CD4-positive, alpha-beta T cell (primary cell): ENCODE measurements at regions of chr3 and their contacts with region 1.

Region 1: GRCh38 chr3:178930116-178930515 is 141.5 kb downstream of the ZMAT3 start:
- DNase-seq: no peak
- ATAC-seq: no peak
- H3K4me3 ChIP-seq: no peak overlapping the region
- H3K4me3 Mint-ChIP-seq: no peak overlapping the region
- H3K27ac ChIP-seq: no peak overlapping the region
- H3K27ac Mint-ChIP-seq: no peak overlapping the region
- H3K4me1 ChIP-seq: no peaks in the 10 kb centered on the region
- H3K4me1 Mint-ChIP-seq: no peaks in the 10 kb centered on the region
- H3K27me3 ChIP-seq: no peaks in the 10 kb centered on the region
- H3K27me3 Mint-ChIP-seq: no peaks in the 10 kb centered on the region
- CTCF ChIP-seq: no peak

Region 2: DNA sequence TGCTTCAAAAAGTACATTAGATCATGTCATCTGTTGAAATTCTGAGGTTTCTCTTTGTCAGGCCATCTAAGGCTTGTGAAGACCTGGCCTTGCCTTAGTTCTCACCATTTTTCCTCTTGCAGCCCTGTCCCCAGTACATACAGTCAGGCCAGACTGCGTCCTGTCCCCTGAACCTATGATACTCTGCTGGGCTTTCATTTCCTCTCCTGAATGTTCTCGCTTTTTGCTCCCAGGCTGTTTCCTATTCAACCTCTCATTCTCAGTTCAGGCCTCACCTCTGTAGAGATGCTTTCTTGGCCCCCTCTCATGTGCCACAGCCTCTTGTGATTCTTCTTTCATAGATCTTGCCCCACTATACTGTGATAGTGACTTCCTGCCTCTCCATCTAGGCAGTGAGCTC is 1042.6 kb before region 1 on chr3:
- CTCF ChIA-PET with region 1: no interaction called
- POLR2A ChIA-PET with region 1: no interaction called
- intact Hi-C with region 1: loop called in 1 of 2 experiments (anchors 5 kb)
- DNase-seq: no peak
- ATAC-seq: no peak
- H3K4me3 ChIP-seq: no peak overlapping the region
- H3K4me3 Mint-ChIP-seq: no peak overlapping the region
- H3K27ac ChIP-seq: no peak overlapping the region
- H3K27ac Mint-ChIP-seq: no peak overlapping the region
- H3K4me1 ChIP-seq: no peaks in the 10 kb centered on the region
- H3K4me1 Mint-ChIP-seq: peaks cover 15% of the 10 kb centered on the region
- H3K27me3 ChIP-seq: no peaks in the 10 kb centered on the region
- H3K27me3 Mint-ChIP-seq: no peaks in the 10 kb centered on the region
- CTCF ChIP-seq: no peak

Region 3: DNA sequence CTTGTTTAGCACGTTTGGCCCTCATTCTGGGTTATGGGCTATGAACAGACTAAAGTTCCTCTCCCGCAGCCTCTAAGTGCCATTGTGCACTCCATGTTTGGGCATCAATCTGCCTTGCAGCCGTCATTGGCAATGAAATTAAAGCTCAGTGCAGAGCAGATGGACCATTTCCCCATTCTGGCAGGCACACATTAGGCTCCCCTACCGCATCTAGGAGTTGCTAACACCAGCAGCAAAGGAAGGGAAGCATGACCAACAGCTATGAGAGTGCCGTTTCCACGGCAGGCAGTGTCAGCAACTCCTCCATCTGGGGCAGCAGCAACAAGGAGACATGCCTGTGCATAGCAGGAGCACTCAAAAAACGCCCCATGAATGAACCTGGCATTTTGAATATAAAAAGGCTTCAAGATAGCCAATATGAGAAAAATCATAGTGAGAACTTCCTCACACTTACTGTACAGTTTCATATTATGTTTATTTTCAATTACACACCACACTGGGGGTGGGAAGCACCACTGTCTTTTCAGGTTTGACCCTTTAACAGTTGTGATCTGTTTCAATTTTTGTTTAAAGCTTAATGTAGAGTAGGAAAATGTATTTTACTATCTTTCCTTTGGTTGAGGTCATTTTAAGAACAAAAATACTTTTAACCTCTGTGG is 175.1 kb before region 1 on chr3:
- CTCF ChIA-PET with region 1: no interaction called
- POLR2A ChIA-PET with region 1: no interaction called
- intact Hi-C with region 1: no loop called
- DNase-seq: no peak
- ATAC-seq: no peak
- H3K4me3 ChIP-seq: no peak overlapping the region
- H3K4me3 Mint-ChIP-seq: no peak overlapping the region
- H3K27ac ChIP-seq: no peak overlapping the region
- H3K27ac Mint-ChIP-seq: no peak overlapping the region
- H3K4me1 ChIP-seq: no peaks in the 10 kb centered on the region
- H3K4me1 Mint-ChIP-seq: no peaks in the 10 kb centered on the region
- H3K27me3 ChIP-seq: no peaks in the 10 kb centered on the region
- H3K27me3 Mint-ChIP-seq: no peaks in the 10 kb centered on the region
- CTCF ChIP-seq: no peak